ENCODE measurements at regions of chr1 and their contacts with region 1.

Region 1: DNA sequence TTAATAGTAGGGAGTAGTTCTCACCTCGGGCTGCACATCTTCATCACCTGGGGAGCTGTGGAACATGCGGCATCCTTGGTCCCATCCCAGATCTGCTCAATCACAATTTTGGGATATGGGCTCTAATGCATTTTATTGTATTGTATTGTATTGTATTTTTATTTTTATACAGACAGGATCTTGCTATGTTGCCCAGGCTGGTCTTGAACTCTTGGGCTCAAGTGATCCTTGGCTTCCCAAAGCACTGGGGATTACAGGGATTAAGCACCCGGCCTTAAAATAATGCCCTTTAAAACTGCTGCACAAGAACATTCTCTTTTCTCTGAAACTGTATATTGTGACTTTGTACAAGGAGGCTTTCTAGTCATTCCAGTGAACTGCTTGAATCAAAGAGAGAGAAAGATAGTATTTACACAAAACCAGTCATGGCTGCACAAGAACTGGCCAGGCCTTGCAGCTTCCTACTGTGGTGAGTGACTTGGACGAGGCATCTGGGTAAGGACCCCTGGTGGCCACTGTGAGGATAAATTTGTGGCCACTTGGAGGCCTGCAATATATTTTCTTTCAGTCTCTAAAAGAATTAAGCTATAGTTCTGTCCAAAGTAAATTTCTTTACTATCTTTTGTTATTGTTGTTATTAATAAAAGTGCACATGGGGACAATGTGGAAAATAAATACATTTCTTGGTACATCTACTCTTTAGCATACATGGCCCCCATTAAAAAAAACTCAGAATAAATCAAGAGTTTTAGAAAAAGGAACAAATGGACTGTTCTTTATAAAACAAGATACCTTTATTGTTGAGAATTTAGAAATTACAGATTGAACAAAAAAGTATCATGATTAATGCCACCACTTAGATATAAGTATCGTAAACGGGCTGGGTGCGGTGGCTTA is 48.0 kb downstream of the TBCE start:
- DNase-seq: peak; percentile 53 to 64 (median 61)
- H3K4me3 ChIP-seq: no peak overlapping the region
- H3K4me3 Mint-ChIP-seq: no peak overlapping the region
- H3K27ac ChIP-seq: no peak overlapping the region
- H3K27ac Mint-ChIP-seq: peak overlapping the region in 1 of 7 donors; percentile 8
- H3K4me1 ChIP-seq: no peaks in the 10 kb centered on the region
- H3K4me1 Mint-ChIP-seq: peaks cover 6 to 11% (median 9%) of the 10 kb centered on the region in 4 donors
- H3K27me3 ChIP-seq: no peaks in the 10 kb centered on the region
- H3K27me3 Mint-ChIP-seq: no peaks in the 10 kb centered on the region

Region 2: GRCh38 chr1:234499119-234499942 is 915.9 kb before region 1 on chr1:
- CTCF ChIA-PET with region 1: interaction called, 19 read pairs
- POLR2A ChIA-PET with region 1: no interaction called
- intact Hi-C with region 1: loop called (anchors 1 kb)
- DNase-seq: peak; percentile 72 to 78 (median 74)
- H3K4me3 ChIP-seq: no peak overlapping the region
- H3K4me3 Mint-ChIP-seq: peak overlapping the region; percentile 28 to 62 (median 43)
- H3K27ac ChIP-seq: no peak overlapping the region
- H3K27ac Mint-ChIP-seq: peak overlapping the region in 6 of 7 donors; percentile 15 to 63 (median 48)
- H3K4me1 ChIP-seq: peaks cover 11% of the 10 kb centered on the region
- H3K4me1 Mint-ChIP-seq: peaks cover 6 to 11% (median 9%) of the 10 kb centered on the region in 4 donors
- H3K27me3 ChIP-seq: no peaks in the 10 kb centered on the region
- H3K27me3 Mint-ChIP-seq: peaks cover 2 to 13% of the 10 kb centered on the region in 2 donors

Region 3: GRCh38 chr1:235105051-235106043 is 309.9 kb before region 1 on chr1:
- CTCF ChIA-PET with region 1: interaction called, 96 read pairs
- POLR2A ChIA-PET with region 1: interaction called, 8 read pairs
- intact Hi-C with region 1: loop called (anchors 1 kb)
- DNase-seq: peak in 4 of 5 donors; percentile 26 to 38 (median 34)
- H3K4me3 ChIP-seq: peak overlapping the region in 1 of 2 donors; percentile 39
- H3K4me3 Mint-ChIP-seq: peak overlapping the region; percentile 72 to 98 (median 86)
- H3K27ac ChIP-seq: peak overlapping the region; percentile 5
- H3K27ac Mint-ChIP-seq: peak overlapping the region; percentile 81 to 96 (median 88)
- H3K4me1 ChIP-seq: peaks cover 42% of the 10 kb centered on the region
- H3K4me1 Mint-ChIP-seq: peaks cover 28 to 52% (median 38%) of the 10 kb centered on the region in 4 donors
- H3K27me3 ChIP-seq: no peaks in the 10 kb centered on the region
- H3K27me3 Mint-ChIP-seq: peaks cover 0 to 1% of the 10 kb centered on the region in 2 donors

Region 4: GRCh38 chr1:235160957-235161684 is 254.1 kb before region 1 on chr1 and contains the start of gene RBM34:
- CTCF ChIA-PET with region 1: interaction called, 6 read pairs
- POLR2A ChIA-PET with region 1: interaction called, 4 read pairs
- intact Hi-C with region 1: loop called (anchors 2 kb)
- DNase-seq: peak; percentile 90 to 93 (median 91)
- H3K4me3 ChIP-seq: peak within 1 kb of the TSS; percentile 79 to 80
- H3K4me3 Mint-ChIP-seq: peak within 1 kb of the TSS; percentile 94 to 99 (median 98)
- H3K27ac ChIP-seq: peak within 1 kb of the TSS; percentile 92
- H3K27ac Mint-ChIP-seq: peak within 1 kb of the TSS; percentile 95 to 99 (median 98)
- H3K4me1 ChIP-seq: peaks cover 50% of the 10 kb centered on the region
- H3K4me1 Mint-ChIP-seq: peaks cover 15 to 30% (median 22%) of the 10 kb centered on the region in 4 donors
- H3K27me3 ChIP-seq: no peaks in the 10 kb centered on the region
- H3K27me3 Mint-ChIP-seq: no peaks in the 10 kb centered on the region
- total RNA-seq, gene RBM34: 120 TPM

Region 5: DNA sequence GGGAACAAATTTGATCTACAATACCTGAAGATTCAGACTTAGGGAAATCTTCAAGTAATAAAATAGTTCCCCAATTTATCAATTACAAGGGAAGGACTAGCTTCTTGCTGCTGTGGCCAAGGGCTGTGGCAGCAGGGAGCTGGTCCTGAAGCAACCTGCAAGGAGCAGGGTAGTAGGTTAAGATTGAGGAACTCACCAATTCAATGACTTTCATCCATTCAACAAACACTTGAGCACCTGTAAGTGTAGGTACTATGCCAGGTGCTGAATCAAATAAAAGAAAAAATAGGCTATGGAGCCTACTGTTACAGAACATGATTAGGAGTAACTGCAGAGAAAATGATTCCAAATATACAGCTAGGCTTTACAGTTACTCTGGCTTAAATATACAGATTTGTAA is 190.0 kb before region 1 on chr1:
- CTCF ChIA-PET with region 1: interaction called, 20 read pairs
- POLR2A ChIA-PET with region 1: no interaction called
- intact Hi-C with region 1: no loop called
- DNase-seq: no peak
- H3K4me3 ChIP-seq: no peak overlapping the region
- H3K4me3 Mint-ChIP-seq: no peak overlapping the region
- H3K27ac ChIP-seq: no peak overlapping the region
- H3K27ac Mint-ChIP-seq: no peak overlapping the region
- H3K4me1 ChIP-seq: no peaks in the 10 kb centered on the region
- H3K4me1 Mint-ChIP-seq: peaks cover 0 to 7% (median 4%) of the 10 kb centered on the region in 4 donors
- H3K27me3 ChIP-seq: no peaks in the 10 kb centered on the region
- H3K27me3 Mint-ChIP-seq: no peaks in the 10 kb centered on the region

Region 6: GRCh38 chr1:235259133-235259778 is 156.0 kb before region 1 on chr1:
- CTCF ChIA-PET with region 1: interaction called, 130 read pairs
- POLR2A ChIA-PET with region 1: no interaction called
- intact Hi-C with region 1: no loop called
- DNase-seq: peak in 2 of 5 donors; percentile 7 to 10
- H3K4me3 ChIP-seq: no peak overlapping the region
- H3K4me3 Mint-ChIP-seq: peak overlapping the region in 7 of 8 donors; percentile 10 to 74 (median 48)
- H3K27ac ChIP-seq: peak overlapping the region; percentile 26
- H3K27ac Mint-ChIP-seq: peak overlapping the region in 6 of 7 donors; percentile 27 to 81 (median 60)
- H3K4me1 ChIP-seq: peaks cover 76% of the 10 kb centered on the region
- H3K4me1 Mint-ChIP-seq: peaks cover 47 to 90% (median 58%) of the 10 kb centered on the region in 4 donors
- H3K27me3 ChIP-seq: no peaks in the 10 kb centered on the region
- H3K27me3 Mint-ChIP-seq: no peaks in the 10 kb centered on the region

Region 7: DNA sequence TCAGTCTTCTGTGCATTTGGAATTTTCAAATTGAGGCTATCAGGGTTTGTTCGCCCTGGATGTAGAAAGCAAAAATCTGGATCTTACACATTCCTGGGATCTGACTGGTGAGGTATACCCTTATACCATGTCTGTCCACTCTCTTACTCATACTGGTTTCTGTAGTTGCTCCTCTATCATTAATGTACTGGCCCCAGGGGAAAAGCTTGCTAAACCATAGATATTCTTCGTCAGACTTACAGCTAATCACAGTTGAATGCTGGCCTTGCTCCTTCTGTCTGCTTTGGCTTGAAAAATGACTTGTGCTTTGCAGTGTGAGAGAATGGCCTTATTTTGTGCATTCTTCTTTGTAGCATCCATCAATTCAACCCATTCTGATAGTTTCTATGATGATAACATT is 17.5 kb before region 1 on chr1:
- CTCF ChIA-PET with region 1: interaction called, 10 read pairs
- POLR2A ChIA-PET with region 1: no interaction called
- intact Hi-C with region 1: no loop called
- DNase-seq: no peak
- H3K4me3 ChIP-seq: no peak overlapping the region
- H3K4me3 Mint-ChIP-seq: no peak overlapping the region
- H3K27ac ChIP-seq: no peak overlapping the region
- H3K27ac Mint-ChIP-seq: no peak overlapping the region
- H3K4me1 ChIP-seq: no peaks in the 10 kb centered on the region
- H3K4me1 Mint-ChIP-seq: peaks cover 3 to 17% (median 6%) of the 10 kb centered on the region in 4 donors
- H3K27me3 ChIP-seq: no peaks in the 10 kb centered on the region
- H3K27me3 Mint-ChIP-seq: no peaks in the 10 kb centered on the region

Region 8: DNA sequence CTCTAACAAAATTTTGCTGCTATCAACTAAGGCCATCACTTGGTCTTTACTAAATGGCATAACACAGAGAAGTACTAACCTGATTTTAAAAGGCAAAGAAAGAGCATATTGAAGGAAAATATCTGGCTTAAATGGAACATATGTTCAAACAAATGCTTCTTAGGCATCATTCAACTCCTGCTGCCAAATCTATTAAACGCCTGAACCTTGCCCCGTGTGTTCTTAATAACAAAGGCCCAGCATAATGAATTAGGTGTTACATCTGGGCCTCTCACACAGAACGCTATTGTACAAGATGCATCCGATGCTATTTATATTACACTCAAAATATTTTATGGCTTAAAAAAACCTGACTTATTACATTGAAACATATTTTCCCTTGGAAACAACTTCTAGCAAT is 40.6 kb after region 1 on chr1:
- CTCF ChIA-PET with region 1: no interaction called
- POLR2A ChIA-PET with region 1: no interaction called
- intact Hi-C with region 1: no loop called
- DNase-seq: no peak
- H3K4me3 ChIP-seq: no peak overlapping the region
- H3K4me3 Mint-ChIP-seq: no peak overlapping the region
- H3K27ac ChIP-seq: no peak overlapping the region
- H3K27ac Mint-ChIP-seq: no peak overlapping the region
- H3K4me1 ChIP-seq: no peaks in the 10 kb centered on the region
- H3K4me1 Mint-ChIP-seq: no peaks in the 10 kb centered on the region
- H3K27me3 ChIP-seq: no peaks in the 10 kb centered on the region
- H3K27me3 Mint-ChIP-seq: no peaks in the 10 kb centered on the region

Region 9: GRCh38 chr1:235697508-235697907 is 282.3 kb after region 1 on chr1:
- CTCF ChIA-PET with region 1: no interaction called
- POLR2A ChIA-PET with region 1: no interaction called
- intact Hi-C with region 1: no loop called
- DNase-seq: peak in 2 of 5 donors; percentile 4 to 6
- H3K4me3 ChIP-seq: no peak overlapping the region
- H3K4me3 Mint-ChIP-seq: no peak overlapping the region
- H3K27ac ChIP-seq: no peak overlapping the region
- H3K27ac Mint-ChIP-seq: peak overlapping the region in 4 of 7 donors; percentile 0 to 63 (median 6)
- H3K4me1 ChIP-seq: no peaks in the 10 kb centered on the region
- H3K4me1 Mint-ChIP-seq: peaks cover 0 to 4% (median 2%) of the 10 kb centered on the region in 4 donors
- H3K27me3 ChIP-seq: no peaks in the 10 kb centered on the region
- H3K27me3 Mint-ChIP-seq: no peaks in the 10 kb centered on the region

Region 10: GRCh38 chr1:236058141-236058934 is 643.1 kb after region 1 on chr1:
- CTCF ChIA-PET with region 1: no interaction called
- POLR2A ChIA-PET with region 1: no interaction called
- intact Hi-C with region 1: no loop called
- DNase-seq: no peak
- H3K4me3 ChIP-seq: no peak overlapping the region
- H3K4me3 Mint-ChIP-seq: no peak overlapping the region
- H3K27ac ChIP-seq: no peak overlapping the region
- H3K27ac Mint-ChIP-seq: no peak overlapping the region
- H3K4me1 ChIP-seq: peaks cover 6% of the 10 kb centered on the region
- H3K4me1 Mint-ChIP-seq: peaks cover 6 to 8% (median 7%) of the 10 kb centered on the region in 4 donors
- H3K27me3 ChIP-seq: no peaks in the 10 kb centered on the region
- H3K27me3 Mint-ChIP-seq: peaks cover 8 to 9% of the 10 kb centered on the region in 2 donors